Activated CD4-positive, alpha-beta memory T cell treated with anti-CD3 and anti-CD28 coated beads, Interleukin-2, amount 10 ng/mL, durations not matched to agents 7 days and 5 days (primary cell): ENCODE measurements at regions of chr11 and their contacts with region 1.

Region 1: GRCh38 chr11:87352759-87353707 is 315.3 kb downstream of the TMEM135 start:
- DNase-seq: peak; percentile 85
- H3K4me3 Mint-ChIP-seq: no peak overlapping the region
- H3K27ac Mint-ChIP-seq: no peak overlapping the region
- H3K4me1 Mint-ChIP-seq: peaks cover 13% of the 10 kb centered on the region
- H3K27me3 Mint-ChIP-seq: peaks cover 8% of the 10 kb centered on the region

Region 2: DNA sequence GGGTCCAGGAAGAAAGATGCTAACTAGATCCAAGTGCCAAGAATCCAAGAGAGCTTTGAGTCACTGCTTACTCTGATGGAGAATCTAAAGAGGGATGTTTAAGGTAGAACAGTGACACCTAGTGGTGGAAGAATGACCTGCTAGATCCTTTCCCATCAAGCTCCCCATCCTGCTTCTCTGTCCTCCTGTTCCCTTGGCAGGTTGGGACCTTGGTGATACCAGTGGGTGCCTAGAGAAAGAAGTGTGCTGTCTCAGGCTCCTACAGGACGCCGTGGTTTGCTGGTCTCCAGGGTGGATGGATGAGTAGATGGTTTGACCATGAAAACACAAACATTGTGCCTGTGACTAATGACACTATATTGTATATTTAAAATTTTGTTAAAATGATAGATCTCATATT is 68.4 kb after region 1 on chr11:
- CTCF ChIA-PET with region 1: interaction called, 45 read pairs
- POLR2A ChIA-PET with region 1: interaction called, 3 read pairs
- DNase-seq: peak; percentile 17
- H3K4me3 Mint-ChIP-seq: no peak overlapping the region
- H3K27ac Mint-ChIP-seq: no peak overlapping the region
- H3K4me1 Mint-ChIP-seq: no peaks in the 10 kb centered on the region
- H3K27me3 Mint-ChIP-seq: peaks cover 4% of the 10 kb centered on the region